Ovary (tissue), 10 donors: ENCODE measurements at regions of chr9 and their contacts with region 1.

Region 1: GRCh38 chr9:115591584-115591984 is 473.6 kb upstream of the TNC start:
- DNase-seq: peak in 2 of 5 donors; percentile 10 to 49
- H3K4me3 ChIP-seq: no peak overlapping the region
- H3K27ac ChIP-seq: no peak overlapping the region
- H3K4me1 ChIP-seq: no peaks in the 10 kb centered on the region
- H3K27me3 ChIP-seq: no peaks in the 10 kb centered on the region
- CTCF ChIP-seq: peak in 2 of 3 donors; percentile 17 to 30
- EP300 ChIP-seq: no peak
- POLR2A ChIP-seq: no peak

Region 2: GRCh38 chr9:115289757-115290208 is 301.8 kb before region 1 on chr9:
- intact Hi-C with region 1: no loop called
- DNase-seq: no peak
- H3K4me3 ChIP-seq: no peak overlapping the region
- H3K27ac ChIP-seq: no peak overlapping the region
- H3K4me1 ChIP-seq: no peaks in the 10 kb centered on the region
- H3K27me3 ChIP-seq: no peaks in the 10 kb centered on the region
- CTCF ChIP-seq: no peak
- EP300 ChIP-seq: no peak
- POLR2A ChIP-seq: no peak

Region 3: DNA sequence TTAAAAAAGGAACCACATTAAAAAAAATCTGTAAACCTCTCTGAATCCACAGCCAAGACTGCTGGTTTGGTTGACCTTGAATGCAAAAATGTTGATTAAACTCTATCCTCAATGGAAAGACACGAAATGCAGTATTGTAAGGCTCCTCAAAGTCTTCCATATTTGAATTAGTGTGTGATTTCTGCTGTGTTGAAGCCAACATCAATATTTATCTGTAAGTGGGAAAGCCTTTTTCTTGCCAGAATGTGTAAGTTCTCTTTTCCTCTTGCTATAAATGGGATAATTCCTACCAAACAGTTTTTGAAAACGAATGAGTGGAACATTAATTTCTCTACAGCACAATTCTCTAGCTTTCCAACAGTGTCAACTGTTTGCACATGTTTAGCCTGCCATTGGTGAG is 51.5 kb before region 1 on chr9:
- intact Hi-C with region 1: no loop called
- DNase-seq: no peak
- H3K4me3 ChIP-seq: no peak overlapping the region
- H3K27ac ChIP-seq: no peak overlapping the region
- H3K4me1 ChIP-seq: no peaks in the 10 kb centered on the region
- H3K27me3 ChIP-seq: peaks cover 3% of the 10 kb centered on the region
- CTCF ChIP-seq: no peak
- EP300 ChIP-seq: no peak
- POLR2A ChIP-seq: no peak

Region 4: GRCh38 chr9:116572095-116572748 is 980.6 kb after region 1 on chr9:
- intact Hi-C with region 1: loop called in 1 of 4 experiments (anchors 5 kb)
- DNase-seq: peak; percentile 93 to 97 (median 94)
- H3K4me3 ChIP-seq: no peak overlapping the region
- H3K27ac ChIP-seq: no peak overlapping the region
- H3K4me1 ChIP-seq: no peaks in the 10 kb centered on the region
- H3K27me3 ChIP-seq: no peaks in the 10 kb centered on the region
- CTCF ChIP-seq: peak; percentile 87 to 91 (median 91)
- EP300 ChIP-seq: no peak
- POLR2A ChIP-seq: peak; percentile 24

Region 5: GRCh38 chr9:116646661-116647512 is 1055.3 kb after region 1 on chr9:
- intact Hi-C with region 1: loop called (anchors 10 kb)
- DNase-seq: no peak
- H3K4me3 ChIP-seq: no peak overlapping the region
- H3K27ac ChIP-seq: no peak overlapping the region
- H3K4me1 ChIP-seq: peaks cover 5% of the 10 kb centered on the region
- H3K27me3 ChIP-seq: no peaks in the 10 kb centered on the region
- CTCF ChIP-seq: no peak
- EP300 ChIP-seq: no peak
- POLR2A ChIP-seq: no peak

Region 6: DNA sequence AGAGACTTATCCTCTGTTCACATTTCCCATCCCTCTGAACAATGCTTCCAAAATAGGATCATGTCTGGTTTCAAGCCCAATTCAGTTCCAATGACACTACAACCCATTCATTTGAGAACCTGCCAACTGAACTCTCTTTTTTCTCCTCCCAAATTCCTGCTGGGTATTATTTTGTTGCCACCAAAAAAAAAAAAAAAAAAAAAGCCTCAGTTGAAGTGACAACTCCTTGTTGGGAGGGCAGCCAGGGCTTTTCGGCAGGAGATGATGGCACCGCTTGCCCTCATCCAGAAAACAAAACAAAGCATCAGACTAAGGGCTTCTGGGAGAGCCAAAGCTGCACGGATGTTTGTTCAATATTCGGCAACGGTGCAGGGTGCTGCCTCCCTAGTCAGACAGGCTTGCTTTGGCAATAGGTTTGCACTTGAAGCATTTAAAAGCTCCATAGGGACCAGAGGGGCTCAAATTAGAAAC is 1065.0 kb after region 1 on chr9:
- intact Hi-C with region 1: loop called in 3 of 4 experiments (anchors 10 kb)
- DNase-seq: no peak
- H3K4me3 ChIP-seq: no peak overlapping the region
- H3K27ac ChIP-seq: no peak overlapping the region
- H3K4me1 ChIP-seq: no peaks in the 10 kb centered on the region
- H3K27me3 ChIP-seq: no peaks in the 10 kb centered on the region
- CTCF ChIP-seq: no peak
- EP300 ChIP-seq: no peak
- POLR2A ChIP-seq: no peak